ENCODE measurements at regions of chr11 and their contacts with region 1.

Region 1: DNA sequence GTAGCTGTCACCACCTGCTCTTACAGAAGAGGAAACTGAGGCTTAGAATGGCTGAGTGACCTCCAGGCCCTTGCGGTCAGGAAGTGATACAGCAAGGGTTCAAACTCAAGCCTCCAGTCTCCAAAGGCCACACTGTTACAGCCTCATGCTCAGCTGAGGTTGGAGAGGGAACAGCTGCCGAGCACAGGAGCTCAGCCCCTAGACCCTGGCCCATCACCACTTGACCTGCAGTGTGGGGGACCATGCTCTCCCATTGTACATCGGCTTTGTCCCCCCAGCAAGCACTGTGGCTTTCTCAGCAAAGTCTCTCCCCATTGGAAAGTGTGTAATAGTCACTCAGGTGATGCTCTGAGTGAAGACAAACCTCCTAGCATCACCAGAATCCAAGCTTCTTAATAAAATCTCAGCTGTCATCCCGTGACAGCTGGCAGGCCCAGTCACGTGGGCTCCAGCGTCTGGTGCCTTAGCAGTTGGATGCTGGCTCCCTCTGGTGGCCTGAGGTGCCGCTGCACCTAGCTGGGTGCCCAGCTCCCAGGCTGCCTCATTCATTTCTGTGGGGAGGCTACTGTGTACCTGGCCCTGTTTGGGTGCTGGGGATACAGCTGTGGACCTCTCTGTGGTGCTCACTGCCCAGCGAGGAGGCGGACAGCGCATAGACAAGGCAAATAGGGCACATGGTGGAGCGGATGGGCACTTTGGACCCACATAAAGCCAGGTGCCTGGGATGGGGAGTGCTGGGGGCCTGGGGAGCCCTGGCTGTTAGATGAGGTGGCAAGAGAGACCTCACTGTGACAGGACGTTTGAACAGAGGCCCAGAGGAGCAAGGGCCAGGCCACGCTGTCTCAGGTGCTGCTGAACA is 19.1 kb upstream of the MYRF start:
- DNase-seq: peak; percentile 69 to 85 (median 80)
- ATAC-seq: peak; percentile 98
- H3K4me3 ChIP-seq: no peak overlapping the region
- H3K4me3 Mint-ChIP-seq: no peak overlapping the region
- H3K27ac ChIP-seq: no peak overlapping the region
- H3K27ac Mint-ChIP-seq: peak overlapping the region in 7 of 9 donors; percentile 17 to 84 (median 46)
- H3K4me1 ChIP-seq: no peaks in the 10 kb centered on the region
- H3K4me1 Mint-ChIP-seq: peaks cover 5 to 8% (median 5%) of the 10 kb centered on the region in 7 donors
- H3K27me3 ChIP-seq: no peaks in the 10 kb centered on the region
- H3K27me3 Mint-ChIP-seq: peaks cover 0 to 4% (median 0%) of the 10 kb centered on the region in 5 donors

Region 2: GRCh38 chr11:61679893-61680621 is 53.3 kb before region 1 on chr11 and contains the start of gene DAGLA:
- CTCF ChIA-PET with region 1: interaction called, 22 read pairs
- POLR2A ChIA-PET with region 1: interaction called, 3 read pairs
- intact Hi-C with region 1: loop called (anchors 1 kb)
- DNase-seq: peak; percentile 60 to 91 (median 74)
- ATAC-seq: peak; percentile 89
- H3K4me3 ChIP-seq: no peak within 1 kb of the TSS
- H3K4me3 Mint-ChIP-seq: peak within 1 kb of the TSS in 9 of 10 donors; percentile 38 to 77 (median 67)
- H3K27ac ChIP-seq: no peak within 1 kb of the TSS
- H3K27ac Mint-ChIP-seq: peak within 1 kb of the TSS in 4 of 9 donors; percentile 43 to 65 (median 55)
- H3K4me1 ChIP-seq: peaks cover 14 to 16% of the 10 kb centered on the region in 2 donors
- H3K4me1 Mint-ChIP-seq: peaks cover 0 to 9% (median 5%) of the 10 kb centered on the region in 7 donors
- H3K27me3 ChIP-seq: peaks cover 0 to 3% of the 10 kb centered on the region in 2 donors
- H3K27me3 Mint-ChIP-seq: peaks cover 2 to 27% (median 21%) of the 10 kb centered on the region in 5 donors
- total RNA-seq, gene DAGLA: 0.15 to 2.1 (median 0.35) TPM

Measured in naive thymus-derived CD4-positive, alpha-beta T cell (primary cell).